Activated CD4-positive, alpha-beta T cell treated with anti-CD3 and anti-CD28 coated beads for 36 hours (primary cell): ENCODE measurements at regions of chr19 and their contacts with region 1.

Region 1: GRCh38 chr19:47778089-47778953 is at the start of gene SELENOW:
- DNase-seq: peak; percentile 87
- ATAC-seq: peak; percentile 92
- H3K4me3 Mint-ChIP-seq: peak within 1 kb of the TSS; percentile 95
- H3K27ac Mint-ChIP-seq: peak within 1 kb of the TSS; percentile 92
- H3K4me1 Mint-ChIP-seq: peaks cover 20% of the 10 kb centered on the region
- H3K27me3 Mint-ChIP-seq: no peaks in the 10 kb centered on the region
- total RNA-seq, gene SELENOW: 150 to 178 TPM

Region 2: DNA sequence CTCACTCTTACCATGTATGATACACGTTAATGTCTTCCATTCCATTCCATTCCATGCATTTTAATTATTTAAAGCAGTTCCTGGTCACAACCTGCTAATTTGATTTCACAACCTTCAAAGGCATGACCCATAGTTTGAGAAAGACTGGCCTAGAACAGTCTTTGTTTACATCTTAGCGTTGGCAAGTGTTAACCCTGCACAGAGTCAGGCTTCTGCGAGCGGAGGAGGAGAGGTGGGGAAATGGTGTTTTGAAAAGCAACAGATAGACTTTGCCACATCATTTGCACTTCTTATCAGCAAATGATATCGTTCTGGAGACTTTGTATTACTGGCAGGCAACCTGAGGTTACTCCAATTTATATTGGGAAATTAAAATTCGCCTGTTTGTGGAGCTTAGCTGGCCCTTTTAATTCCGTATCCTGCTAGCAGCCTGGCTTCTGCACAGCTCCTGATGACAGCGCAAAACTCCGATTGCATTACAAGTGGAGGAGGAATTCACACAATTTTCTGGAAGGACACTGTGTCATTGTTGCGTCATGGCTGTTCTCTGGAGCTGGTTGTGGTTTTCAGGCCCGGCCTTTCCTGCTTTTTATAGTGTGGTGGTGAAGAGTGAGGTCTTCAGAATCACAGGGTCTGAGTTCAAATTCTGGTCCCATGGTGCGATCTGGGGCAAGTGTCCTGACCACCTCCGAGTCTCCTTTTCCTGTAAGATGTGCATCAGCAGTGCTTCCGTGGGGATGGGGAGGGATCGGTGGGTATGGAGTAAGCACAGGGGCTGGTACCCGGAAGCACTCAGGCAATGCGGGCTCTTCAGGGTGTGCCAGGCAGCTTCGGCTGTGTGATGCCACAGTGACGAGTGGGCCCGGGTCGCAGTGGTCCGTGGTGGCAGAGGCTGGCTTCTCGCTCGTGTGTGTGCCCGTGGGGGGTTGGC is 114.2 kb before region 1 on chr19:
- CTCF ChIA-PET with region 1: no interaction called
- POLR2A ChIA-PET with region 1: no interaction called
- intact Hi-C with region 1: no loop called
- DNase-seq: no peak
- ATAC-seq: no peak
- H3K4me3 Mint-ChIP-seq: no peak overlapping the region
- H3K27ac Mint-ChIP-seq: no peak overlapping the region
- H3K4me1 Mint-ChIP-seq: peaks cover 10% of the 10 kb centered on the region
- H3K27me3 Mint-ChIP-seq: no peaks in the 10 kb centered on the region

Region 3: DNA sequence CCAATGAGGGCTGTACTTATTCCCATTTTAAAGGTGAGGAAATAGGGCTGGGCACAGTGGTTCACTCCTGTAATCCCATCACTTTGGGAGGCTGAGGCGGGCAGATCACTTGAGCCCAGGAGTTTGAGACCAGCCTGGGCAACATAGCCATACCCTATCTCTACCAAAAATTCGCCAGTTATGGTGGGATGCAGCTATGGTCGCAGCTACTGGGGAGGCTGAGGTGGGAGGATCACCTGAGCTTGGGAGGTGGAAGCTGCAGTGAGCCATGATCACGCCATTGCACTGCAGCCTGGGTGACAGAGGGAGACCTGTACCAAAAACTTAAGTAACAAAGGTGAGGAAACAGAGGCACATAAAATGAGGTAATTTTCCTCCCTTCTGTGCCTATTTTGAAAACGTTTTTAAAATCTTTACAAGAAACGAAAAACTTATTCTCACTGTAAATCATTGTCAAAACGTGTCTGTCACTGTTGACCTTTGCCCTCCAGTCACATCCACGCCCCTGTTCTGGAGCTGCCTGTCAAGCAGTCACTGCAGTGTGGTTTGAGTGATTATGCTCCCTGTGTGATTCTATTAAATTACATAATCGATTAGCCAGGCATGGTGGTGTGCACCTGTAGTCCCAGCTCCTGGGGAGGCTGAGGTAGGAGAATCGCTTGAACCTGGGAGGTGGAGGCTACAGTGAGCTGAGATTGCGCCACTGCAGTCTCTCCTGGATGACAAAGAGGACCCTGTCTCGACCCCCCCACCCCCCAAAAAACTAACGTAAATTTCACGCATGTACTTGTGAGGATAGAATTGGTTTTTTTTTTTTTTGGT is 20.5 kb before region 1 on chr19:
- CTCF ChIA-PET with region 1: no interaction called
- POLR2A ChIA-PET with region 1: interaction called, 11 read pairs
- intact Hi-C with region 1: no loop called
- DNase-seq: no peak
- ATAC-seq: no peak
- H3K4me3 Mint-ChIP-seq: no peak overlapping the region
- H3K27ac Mint-ChIP-seq: no peak overlapping the region
- H3K4me1 Mint-ChIP-seq: peaks cover under 1% of the 10 kb centered on the region
- H3K27me3 Mint-ChIP-seq: no peaks in the 10 kb centered on the region

Region 4: DNA sequence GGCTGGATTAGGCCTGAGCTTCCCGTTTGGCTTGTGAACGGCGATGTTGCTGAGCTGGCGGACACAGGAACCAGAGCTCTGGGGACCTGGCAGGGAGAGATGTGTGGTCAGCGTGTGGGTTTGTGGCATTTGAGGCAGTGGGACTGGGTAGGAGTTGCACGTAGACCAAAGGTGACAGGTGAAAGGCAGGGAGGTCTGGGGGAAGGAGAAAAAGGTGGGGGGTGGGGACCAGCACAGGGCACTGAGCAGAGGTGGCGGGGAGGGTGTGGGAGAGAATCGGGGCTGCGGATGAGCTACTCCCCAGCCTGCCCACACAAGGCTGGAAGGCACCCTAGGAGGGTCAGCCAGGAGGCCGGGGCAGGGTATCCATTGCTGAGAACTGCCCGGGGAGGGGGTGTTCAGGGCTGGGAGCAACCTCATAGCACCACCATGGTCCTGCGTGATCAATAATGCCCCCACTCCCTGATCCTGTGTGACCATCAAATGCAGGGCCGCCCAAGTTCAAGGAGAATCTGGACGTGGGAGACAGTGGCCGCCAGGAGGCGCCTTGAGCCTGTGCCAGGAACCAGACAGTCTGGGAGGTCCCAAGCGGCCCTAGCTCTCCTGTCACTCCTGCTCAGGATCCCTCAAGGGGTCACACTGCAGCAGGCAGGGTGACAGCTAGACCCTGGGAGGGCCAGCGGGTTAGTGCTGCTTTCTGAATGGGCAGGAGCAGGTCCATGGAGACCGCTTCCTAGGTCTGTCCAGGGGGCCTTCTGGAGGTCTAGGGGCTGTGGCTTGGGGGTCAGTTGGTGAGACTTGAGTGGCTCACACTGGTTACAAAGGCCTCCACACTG is 12.6 kb before region 1 on chr19:
- CTCF ChIA-PET with region 1: interaction called, 18 read pairs
- POLR2A ChIA-PET with region 1: interaction called, 3 read pairs
- intact Hi-C with region 1: no loop called
- DNase-seq: peak; percentile 74
- ATAC-seq: peak; percentile 67
- H3K4me3 Mint-ChIP-seq: no peak overlapping the region
- H3K27ac Mint-ChIP-seq: no peak overlapping the region
- H3K4me1 Mint-ChIP-seq: peaks cover 9% of the 10 kb centered on the region
- H3K27me3 Mint-ChIP-seq: peaks cover 3% of the 10 kb centered on the region

Region 5: GRCh38 chr19:48363810-48364563 is 585.7 kb after region 1 on chr19 and contains the starts of genes SYNGR4 and TMEM143:
- CTCF ChIA-PET with region 1: no interaction called
- POLR2A ChIA-PET with region 1: no interaction called
- intact Hi-C with region 1: no loop called
- DNase-seq: peak; percentile 99
- ATAC-seq: peak; percentile 90
- H3K4me3 Mint-ChIP-seq: peak within 1 kb of the TSS; percentile 84
- H3K27ac Mint-ChIP-seq: peak within 1 kb of the TSS; percentile 95
- H3K4me1 Mint-ChIP-seq: peaks cover 13% of the 10 kb centered on the region
- H3K27me3 Mint-ChIP-seq: no peaks in the 10 kb centered on the region
- total RNA-seq, gene SYNGR4: 0.25 TPM in 1 of 2 experiments, not detected in the other
- total RNA-seq, gene TMEM143: 18.9 to 21.5 TPM